ENCODE measurements at regions of chr10 and their contacts with region 1.

Region 1: GRCh38 chr10:73997787-73998622 is at the start of gene VCL:
- DNase-seq: peak; percentile 97
- ATAC-seq: peak; percentile 91
- H3K4me3 ChIP-seq: peak within 1 kb of the TSS; percentile 92
- H3K27ac ChIP-seq: peak within 1 kb of the TSS; percentile 99
- H3K4me1 ChIP-seq: peaks cover 9% of the 10 kb centered on the region
- H3K27me3 ChIP-seq: no peaks in the 10 kb centered on the region
- CTCF ChIP-seq: no peak
- POLR2A ChIP-seq: peak; percentile 99
- RAD21 ChIP-seq: 0 out of 2 replicates have a peak, but pooled peaks have one; percentile 12
- total RNA-seq, gene VCL: 283 and 316 TPM in 2 replicates

Region 2: GRCh38 chr10:73886085-73886529 is 111.9 kb before region 1 on chr10:
- CTCF ChIA-PET with region 1: no interaction called
- POLR2A ChIA-PET with region 1: interaction called, 8 read pairs
- dilution Hi-C with region 1: no loop called
- in situ Hi-C with region 1: no loop called
- intact Hi-C with region 1: loop called (anchors 2 kb)
- DNase-seq: peak; percentile 82
- ATAC-seq: peak; percentile 77
- H3K4me3 ChIP-seq: no peak overlapping the region
- H3K27ac ChIP-seq: peak overlapping the region; percentile 88; the same call in 1 of the 2 replicates
- H3K4me1 ChIP-seq: peaks cover 26% of the 10 kb centered on the region
- H3K27me3 ChIP-seq: no peaks in the 10 kb centered on the region
- CTCF ChIP-seq: peak; percentile 93
- POLR2A ChIP-seq: no peak
- RAD21 ChIP-seq: peak; percentile 98

Region 3: DNA sequence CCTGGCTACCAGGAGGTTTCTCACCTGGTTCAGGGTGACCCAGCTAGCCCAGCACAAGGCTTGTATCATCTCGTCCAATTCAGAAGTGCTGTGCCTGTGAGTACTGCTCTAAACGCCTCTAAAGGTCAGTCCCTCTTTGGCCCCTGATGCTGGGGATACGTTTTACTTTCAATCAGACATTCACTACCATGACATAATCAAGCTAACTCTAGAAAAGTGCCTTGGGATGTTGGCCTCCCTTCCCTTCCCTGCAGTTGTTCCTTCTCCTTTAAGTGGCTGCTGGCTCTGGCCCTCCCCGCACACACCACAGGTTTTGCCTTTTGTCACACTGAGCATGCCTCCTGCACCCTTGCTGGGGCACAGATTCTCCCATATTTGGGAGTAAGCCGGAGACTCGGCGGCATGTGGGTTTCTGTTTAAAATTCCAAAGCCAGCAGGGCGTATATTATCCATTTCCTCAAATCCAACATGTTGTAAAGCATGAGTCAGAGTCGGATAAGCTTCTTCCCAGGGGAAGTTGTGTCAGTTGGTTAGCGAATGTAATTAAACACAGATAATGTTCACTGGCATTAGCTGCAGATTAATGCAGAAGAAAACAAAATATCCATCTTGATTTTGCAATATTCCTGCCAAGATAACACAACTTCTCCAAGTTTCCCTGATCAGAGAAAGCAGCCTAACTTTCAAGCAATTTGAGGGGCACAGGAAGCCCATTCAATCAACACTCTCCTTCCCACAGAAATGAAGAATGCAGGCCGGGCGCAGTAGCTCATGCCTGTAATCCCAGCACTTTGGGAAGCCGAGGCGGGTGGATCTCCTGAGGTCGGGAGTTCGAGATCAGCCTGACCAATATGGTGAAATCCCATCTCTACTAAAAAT is 31.9 kb before region 1 on chr10:
- CTCF ChIA-PET with region 1: interaction called, 7 read pairs
- POLR2A ChIA-PET with region 1: interaction called, 13 read pairs
- dilution Hi-C with region 1: no loop called
- in situ Hi-C with region 1: no loop called
- intact Hi-C with region 1: loop called (anchors 1 kb)
- DNase-seq: peak; percentile 99
- ATAC-seq: peak; percentile 95
- H3K4me3 ChIP-seq: no peak overlapping the region
- H3K27ac ChIP-seq: peak overlapping the region; percentile 96
- H3K4me1 ChIP-seq: peaks cover 22% of the 10 kb centered on the region
- H3K27me3 ChIP-seq: no peaks in the 10 kb centered on the region
- CTCF ChIP-seq: no peak
- POLR2A ChIP-seq: no peak
- RAD21 ChIP-seq: 0 out of 2 replicates have a peak, but pooled peaks have one; percentile 24

Region 4: GRCh38 chr10:74035303-74035702 is 37.3 kb after region 1 on chr10:
- CTCF ChIA-PET with region 1: interaction called, 5 read pairs
- POLR2A ChIA-PET with region 1: interaction called, 11 read pairs
- dilution Hi-C with region 1: no loop called
- in situ Hi-C with region 1: no loop called
- intact Hi-C with region 1: loop called (anchors 1 kb)
- DNase-seq: peak; percentile 49
- ATAC-seq: peak; percentile 15
- H3K4me3 ChIP-seq: no peak overlapping the region
- H3K27ac ChIP-seq: no peak overlapping the region
- H3K4me1 ChIP-seq: peaks cover 29% of the 10 kb centered on the region
- H3K27me3 ChIP-seq: no peaks in the 10 kb centered on the region
- CTCF ChIP-seq: 0 out of 2 replicates have a peak, but pooled peaks have one; percentile 23
- POLR2A ChIP-seq: no peak
- RAD21 ChIP-seq: no peak; the same call in 1 of the 2 replicates

Region 5: DNA sequence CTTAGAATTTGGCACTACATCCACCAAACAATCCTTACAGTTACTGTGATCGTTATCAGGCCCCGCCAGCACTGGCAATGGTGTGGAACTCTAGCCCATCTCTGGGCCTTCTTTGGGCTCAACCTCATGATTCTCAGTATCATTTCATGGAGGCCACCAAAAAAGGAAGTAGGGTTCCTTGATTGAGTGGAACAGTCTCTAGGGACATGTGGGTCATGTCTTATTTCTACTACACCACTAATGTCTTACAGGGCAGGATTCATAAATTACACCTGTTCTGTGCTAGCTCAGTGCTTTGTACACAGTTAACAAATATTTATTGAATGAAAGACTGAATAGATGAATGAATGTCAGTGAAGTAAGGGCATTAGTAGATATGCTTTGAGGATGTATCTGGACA is 98.8 kb after region 1 on chr10:
- CTCF ChIA-PET with region 1: no interaction called
- POLR2A ChIA-PET with region 1: interaction called, 16 read pairs
- dilution Hi-C with region 1: no loop called
- in situ Hi-C with region 1: no loop called
- intact Hi-C with region 1: no loop called
- DNase-seq: no peak
- ATAC-seq: no peak
- H3K4me3 ChIP-seq: no peak overlapping the region
- H3K27ac ChIP-seq: no peak overlapping the region
- H3K4me1 ChIP-seq: peaks cover 6% of the 10 kb centered on the region; the same call in 1 of the 2 replicates
- H3K27me3 ChIP-seq: no peaks in the 10 kb centered on the region
- CTCF ChIP-seq: no peak
- POLR2A ChIP-seq: no peak
- RAD21 ChIP-seq: no peak

Measured in IMR-90 (cell line).